H1 (cell line): ENCODE measurements at regions of chr4 and their contacts with region 1.

Region 1: DNA sequence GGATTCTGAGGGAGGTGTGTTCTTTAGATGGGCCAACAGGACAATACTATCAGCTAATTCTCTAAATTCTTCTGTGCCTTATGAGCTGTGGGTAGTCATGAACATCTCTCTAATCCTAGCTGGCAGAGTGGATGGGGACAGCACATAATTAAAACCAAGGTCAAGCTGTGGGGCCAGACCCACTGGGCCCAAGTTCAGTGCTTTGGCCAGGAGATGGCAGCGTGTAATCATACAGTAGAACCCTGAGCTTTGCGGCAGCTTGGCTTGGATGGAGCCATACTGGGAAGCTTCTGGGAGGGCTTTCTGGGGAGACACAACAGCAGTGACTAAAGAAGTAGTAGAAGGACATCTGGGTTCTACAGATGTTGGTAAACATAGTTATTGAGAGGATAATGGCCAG is 140.3 kb upstream of the CXCL13 start:
- DNase-seq: peak in 1 of 2 experiments; percentile 49
- H3K4me3 ChIP-seq: no peak overlapping the region
- H3K27ac ChIP-seq: no peak overlapping the region
- H3K4me1 ChIP-seq: no peaks in the 10 kb centered on the region
- H3K27me3 ChIP-seq: no peaks in the 10 kb centered on the region
- CTCF ChIP-seq: peak; percentile 59 to 71 (median 65)
- EP300 ChIP-seq: no peak
- POLR2A ChIP-seq: no peak
- RAD21 ChIP-seq: peak; percentile 77 to 83

Region 2: GRCh38 chr4:77443941-77444340 is 21.3 kb before region 1 on chr4:
- CTCF ChIA-PET with region 1: interaction called, 10 read pairs
- POLR2A ChIA-PET with region 1: no interaction called
- DNase-seq: no peak
- H3K4me3 ChIP-seq: no peak overlapping the region
- H3K27ac ChIP-seq: no peak overlapping the region
- H3K4me1 ChIP-seq: no peaks in the 10 kb centered on the region
- H3K27me3 ChIP-seq: no peaks in the 10 kb centered on the region
- CTCF ChIP-seq: no peak
- EP300 ChIP-seq: no peak
- POLR2A ChIP-seq: no peak
- RAD21 ChIP-seq: no peak

Region 3: GRCh38 chr4:77451530-77451929 is 13.7 kb before region 1 on chr4:
- CTCF ChIA-PET with region 1: interaction called, 10 read pairs
- POLR2A ChIA-PET with region 1: no interaction called
- DNase-seq: no peak
- H3K4me3 ChIP-seq: no peak overlapping the region
- H3K27ac ChIP-seq: no peak overlapping the region
- H3K4me1 ChIP-seq: no peaks in the 10 kb centered on the region
- H3K27me3 ChIP-seq: no peaks in the 10 kb centered on the region
- CTCF ChIP-seq: no peak
- EP300 ChIP-seq: no peak
- POLR2A ChIP-seq: no peak
- RAD21 ChIP-seq: no peak

Region 4: GRCh38 chr4:77488882-77489281 is 23.6 kb after region 1 on chr4:
- CTCF ChIA-PET with region 1: no interaction called
- POLR2A ChIA-PET with region 1: no interaction called
- DNase-seq: no peak
- H3K4me3 ChIP-seq: no peak overlapping the region
- H3K27ac ChIP-seq: no peak overlapping the region
- H3K4me1 ChIP-seq: no peaks in the 10 kb centered on the region
- H3K27me3 ChIP-seq: no peaks in the 10 kb centered on the region
- CTCF ChIP-seq: no peak
- EP300 ChIP-seq: no peak
- POLR2A ChIP-seq: no peak
- RAD21 ChIP-seq: no peak

Region 5: DNA sequence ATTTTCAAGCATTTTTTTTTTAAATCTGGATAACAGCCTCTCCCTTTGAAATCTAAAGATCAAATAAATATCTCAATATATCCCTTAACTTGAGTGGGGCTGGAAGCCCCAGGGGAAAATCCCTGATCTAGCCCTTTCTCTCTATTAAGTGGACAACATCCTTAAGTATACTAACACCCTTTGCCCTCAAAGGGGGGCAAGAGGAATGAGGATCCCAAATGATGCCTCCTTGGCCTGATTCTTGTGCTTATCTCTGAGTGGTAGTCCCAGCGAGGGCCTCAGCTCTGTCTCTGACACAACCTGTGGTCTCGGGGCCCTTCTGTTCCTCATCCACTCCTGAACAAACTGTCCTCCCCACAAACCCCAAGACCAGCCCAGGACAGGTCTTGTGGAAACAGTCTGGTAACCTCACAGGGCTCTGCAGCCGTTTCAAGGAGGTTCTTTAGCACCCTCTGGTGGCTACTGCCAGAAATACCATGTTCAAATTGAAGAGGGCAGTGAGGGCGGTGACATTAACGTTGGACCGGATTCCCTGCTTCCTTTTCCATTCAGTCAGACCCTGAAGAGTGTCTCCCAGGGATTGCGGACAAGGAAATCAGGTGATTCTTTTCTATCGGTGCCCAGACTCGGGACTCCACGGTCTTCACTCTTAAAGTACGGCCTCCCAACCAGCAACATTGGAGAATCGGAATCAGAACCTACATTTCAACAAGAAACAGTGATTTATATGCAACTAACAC is 153.3 kb after region 1 on chr4:
- CTCF ChIA-PET with region 1: interaction called, 14 read pairs
- POLR2A ChIA-PET with region 1: no interaction called
- DNase-seq: peak; percentile 59 to 83
- H3K4me3 ChIP-seq: no peak overlapping the region
- H3K27ac ChIP-seq: no peak overlapping the region
- H3K4me1 ChIP-seq: no peaks in the 10 kb centered on the region
- H3K27me3 ChIP-seq: no peaks in the 10 kb centered on the region
- CTCF ChIP-seq: peak; percentile 47 to 92 (median 85)
- EP300 ChIP-seq: no peak
- POLR2A ChIP-seq: no peak
- RAD21 ChIP-seq: peak; percentile 83 to 90